Psoas muscle (tissue), 8 donors: ENCODE measurements at regions of chr12 and their contacts with region 1.

Region 1: GRCh38 chr12:42482445-42483237 is 106.9 kb downstream of the PRICKLE1 start:
- DNase-seq: peak; percentile 80 to 81
- ATAC-seq: peak; percentile 90 to 94 (median 92)
- H3K4me3 ChIP-seq: peak overlapping the region; percentile 91
- H3K27ac ChIP-seq: peak overlapping the region; percentile 60
- H3K4me1 ChIP-seq: peaks cover 13% of the 10 kb centered on the region
- H3K27me3 ChIP-seq: peaks cover 0 to 6% (median 0%) of the 10 kb centered on the region in 3 donors
- CTCF ChIP-seq: peak; percentile 85

Region 2: DNA sequence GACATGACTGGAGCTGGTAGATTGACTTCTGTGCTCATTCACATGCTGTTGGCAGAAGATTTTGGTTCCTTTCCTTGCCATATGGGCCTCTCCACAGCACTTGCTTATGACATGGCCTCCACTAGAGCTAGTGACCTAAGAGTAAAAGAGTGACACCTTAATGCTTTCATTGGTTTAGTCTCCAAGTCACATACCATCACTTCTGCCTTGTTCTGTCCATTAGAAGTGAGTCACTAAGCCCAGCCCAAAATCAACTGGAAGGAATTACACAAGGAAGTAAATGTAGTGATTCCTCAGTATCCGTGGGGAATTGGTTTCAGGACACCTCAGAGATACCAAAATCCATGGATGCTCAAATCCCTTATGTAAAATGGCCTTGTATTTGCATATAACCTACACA is 75.3 kb before region 1 on chr12:
- intact Hi-C with region 1: no loop called
- DNase-seq: no peak
- ATAC-seq: no peak
- H3K4me3 ChIP-seq: no peak overlapping the region
- H3K27ac ChIP-seq: no peak overlapping the region
- H3K4me1 ChIP-seq: no peaks in the 10 kb centered on the region
- H3K27me3 ChIP-seq: no peaks in the 10 kb centered on the region
- CTCF ChIP-seq: no peak

Region 3: DNA sequence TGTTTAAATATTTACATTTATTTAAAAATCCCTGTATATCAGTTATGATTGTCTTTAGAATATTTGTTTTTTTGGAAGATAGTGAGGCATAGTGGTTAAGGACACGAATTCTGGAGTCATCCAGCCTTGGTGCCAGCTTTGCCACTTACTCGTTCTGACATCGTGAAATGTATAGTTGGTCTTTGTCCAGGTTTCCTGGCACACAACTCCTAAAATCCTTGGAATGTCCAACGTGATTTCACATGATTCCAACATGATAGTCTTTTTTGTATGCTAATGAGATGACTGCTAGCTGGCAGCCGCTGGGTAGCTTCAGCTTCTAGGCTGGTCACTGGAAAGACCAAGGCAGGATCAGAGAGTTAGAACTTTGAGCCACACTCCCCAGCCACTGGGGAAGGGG is 42.1 kb after region 1 on chr12:
- intact Hi-C with region 1: no loop called
- DNase-seq: no peak
- ATAC-seq: no peak
- H3K4me3 ChIP-seq: no peak overlapping the region
- H3K27ac ChIP-seq: no peak overlapping the region
- H3K4me1 ChIP-seq: no peaks in the 10 kb centered on the region
- H3K27me3 ChIP-seq: no peaks in the 10 kb centered on the region
- CTCF ChIP-seq: no peak

Region 4: GRCh38 chr12:42568952-42569915 is 86.6 kb after region 1 on chr12:
- intact Hi-C with region 1: loop called (anchors 2 to 5 kb)
- DNase-seq: no peak
- ATAC-seq: peak; percentile 57 to 89 (median 68)
- H3K4me3 ChIP-seq: no peak overlapping the region
- H3K27ac ChIP-seq: no peak overlapping the region
- H3K4me1 ChIP-seq: no peaks in the 10 kb centered on the region
- H3K27me3 ChIP-seq: no peaks in the 10 kb centered on the region
- CTCF ChIP-seq: peak; percentile 60

Region 5: GRCh38 chr12:43282106-43282505 is 799.5 kb after region 1 on chr12:
- intact Hi-C with region 1: loop called (anchors 5 kb)
- DNase-seq: no peak
- ATAC-seq: no peak
- H3K4me3 ChIP-seq: no peak overlapping the region
- H3K27ac ChIP-seq: no peak overlapping the region
- H3K4me1 ChIP-seq: no peaks in the 10 kb centered on the region
- H3K27me3 ChIP-seq: no peaks in the 10 kb centered on the region
- CTCF ChIP-seq: peak; percentile 40

Region 6: GRCh38 chr12:43338848-43339526 is 856.3 kb after region 1 on chr12:
- intact Hi-C with region 1: loop called in 1 of 2 experiments (anchors 5 kb)
- DNase-seq: no peak
- ATAC-seq: peak; percentile 47 to 81 (median 62)
- H3K4me3 ChIP-seq: no peak overlapping the region
- H3K27ac ChIP-seq: no peak overlapping the region
- H3K4me1 ChIP-seq: no peaks in the 10 kb centered on the region
- H3K27me3 ChIP-seq: no peaks in the 10 kb centered on the region
- CTCF ChIP-seq: peak; percentile 31